ENCODE measurements at regions of chr2 and their contacts with region 1.

Region 1: GRCh38 chr2:99602475-99602874 is 112.7 kb upstream of the REV1 start:
- DNase-seq: no peak
- ATAC-seq: no peak
- H3K4me3 ChIP-seq: no peak overlapping the region
- H3K27ac ChIP-seq: no peak overlapping the region
- H3K4me1 ChIP-seq: no peaks in the 10 kb centered on the region
- H3K27me3 ChIP-seq: peaks cover 7% of the 10 kb centered on the region
- CTCF ChIP-seq: no peak

Region 2: GRCh38 chr2:99554238-99554637 is 48.2 kb before region 1 on chr2:
- CTCF ChIA-PET with region 1: no interaction called
- POLR2A ChIA-PET with region 1: no interaction called
- in situ Hi-C with region 1: no loop called
- intact Hi-C with region 1: no loop called
- DNase-seq: no peak
- ATAC-seq: peak; percentile 87
- H3K4me3 ChIP-seq: no peak overlapping the region; a peak in 1 of 4 replicates
- H3K27ac ChIP-seq: no peak overlapping the region
- H3K4me1 ChIP-seq: no peaks in the 10 kb centered on the region
- H3K27me3 ChIP-seq: peaks cover 10% of the 10 kb centered on the region
- CTCF ChIP-seq: peak; percentile 78

Region 3: DNA sequence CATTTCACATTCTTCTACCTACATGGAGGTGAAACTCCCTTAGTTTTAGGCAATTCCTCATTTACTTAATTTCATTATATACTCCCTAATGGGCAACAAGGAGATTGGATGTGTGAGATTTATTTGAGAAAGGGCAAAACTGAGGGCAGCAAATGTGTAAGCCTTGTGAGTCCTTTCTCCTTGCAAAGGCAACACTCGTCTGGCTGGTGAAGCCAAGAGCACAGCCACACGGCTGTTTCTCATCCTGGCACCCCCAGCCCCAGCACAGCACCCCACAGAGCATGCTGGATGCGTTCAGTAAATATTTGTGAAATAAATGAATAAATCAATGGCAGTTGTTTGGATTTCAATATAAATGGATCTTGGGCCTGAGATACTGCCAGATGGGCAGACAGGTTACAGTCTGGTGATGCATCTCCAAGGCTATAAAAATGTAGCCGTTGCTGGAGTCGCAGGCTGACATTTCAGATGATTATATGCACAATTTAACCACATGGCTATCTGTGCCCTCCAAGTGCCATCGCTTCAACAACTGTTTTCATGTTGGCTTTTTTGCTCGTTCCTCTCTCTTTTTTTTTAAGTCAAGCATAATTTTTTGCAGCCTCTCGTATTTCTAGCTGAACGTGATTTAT is 41.4 kb after region 1 on chr2:
- CTCF ChIA-PET with region 1: no interaction called
- POLR2A ChIA-PET with region 1: interaction called, 20 read pairs
- in situ Hi-C with region 1: no loop called
- intact Hi-C with region 1: no loop called
- DNase-seq: no peak
- ATAC-seq: no peak
- H3K4me3 ChIP-seq: no peak overlapping the region
- H3K27ac ChIP-seq: no peak overlapping the region
- H3K4me1 ChIP-seq: no peaks in the 10 kb centered on the region
- H3K27me3 ChIP-seq: peaks cover 3% of the 10 kb centered on the region; the same call in 1 of the 2 replicates
- CTCF ChIP-seq: no peak

Region 4: GRCh38 chr2:100104718-100105677 is 502.5 kb after region 1 on chr2:
- CTCF ChIA-PET with region 1: no interaction called
- POLR2A ChIA-PET with region 1: no interaction called
- in situ Hi-C with region 1: no loop called
- intact Hi-C with region 1: no loop called
- DNase-seq: no peak
- ATAC-seq: peak; percentile 68
- H3K4me3 ChIP-seq: peak overlapping the region; percentile 27 to 50
- H3K27ac ChIP-seq: no peak overlapping the region
- H3K4me1 ChIP-seq: no peaks in the 10 kb centered on the region
- H3K27me3 ChIP-seq: peaks cover 23% of the 10 kb centered on the region
- CTCF ChIP-seq: no peak

Measured in Panc1 (cell line).